ENCODE measurements at regions of chr1 and their contacts with region 1.

Region 1: GRCh38 chr1:19596714-19597495 is 47.2 kb upstream of the NBL1 start:
- DNase-seq: peak; percentile 99
- H3K4me3 Mint-ChIP-seq: peak overlapping the region; percentile 92
- H3K27ac Mint-ChIP-seq: peak overlapping the region; percentile 100
- H3K4me1 Mint-ChIP-seq: peaks cover 45% of the 10 kb centered on the region
- H3K27me3 Mint-ChIP-seq: no peaks in the 10 kb centered on the region

Region 2: GRCh38 chr1:18926315-18927081 is 670.4 kb before region 1 on chr1:
- CTCF ChIA-PET with region 1: no interaction called
- POLR2A ChIA-PET with region 1: no interaction called
- intact Hi-C with region 1: loop called (anchors 10 kb)
- DNase-seq: peak; percentile 94
- H3K4me3 Mint-ChIP-seq: peak overlapping the region; percentile 79
- H3K27ac Mint-ChIP-seq: peak overlapping the region; percentile 100
- H3K4me1 Mint-ChIP-seq: peaks cover 79% of the 10 kb centered on the region
- H3K27me3 Mint-ChIP-seq: no peaks in the 10 kb centered on the region

Region 3: GRCh38 chr1:19257178-19257914 is 339.6 kb before region 1 on chr1:
- CTCF ChIA-PET with region 1: no interaction called
- POLR2A ChIA-PET with region 1: interaction called, 3 read pairs
- intact Hi-C with region 1: loop called (anchors 5 kb)
- DNase-seq: peak; percentile 80
- H3K4me3 Mint-ChIP-seq: peak overlapping the region; percentile 40
- H3K27ac Mint-ChIP-seq: peak overlapping the region; percentile 96
- H3K4me1 Mint-ChIP-seq: peaks cover 51% of the 10 kb centered on the region
- H3K27me3 Mint-ChIP-seq: no peaks in the 10 kb centered on the region

Region 4: GRCh38 chr1:19390901-19391595 is 205.9 kb before region 1 on chr1:
- CTCF ChIA-PET with region 1: interaction called, 9 read pairs
- POLR2A ChIA-PET with region 1: interaction called, 3 read pairs
- intact Hi-C with region 1: loop called (anchors 1 kb)
- DNase-seq: peak; percentile 69
- H3K4me3 Mint-ChIP-seq: peak overlapping the region; percentile 76
- H3K27ac Mint-ChIP-seq: peak overlapping the region; percentile 94
- H3K4me1 Mint-ChIP-seq: peaks cover 76% of the 10 kb centered on the region
- H3K27me3 Mint-ChIP-seq: no peaks in the 10 kb centered on the region

Region 5: DNA sequence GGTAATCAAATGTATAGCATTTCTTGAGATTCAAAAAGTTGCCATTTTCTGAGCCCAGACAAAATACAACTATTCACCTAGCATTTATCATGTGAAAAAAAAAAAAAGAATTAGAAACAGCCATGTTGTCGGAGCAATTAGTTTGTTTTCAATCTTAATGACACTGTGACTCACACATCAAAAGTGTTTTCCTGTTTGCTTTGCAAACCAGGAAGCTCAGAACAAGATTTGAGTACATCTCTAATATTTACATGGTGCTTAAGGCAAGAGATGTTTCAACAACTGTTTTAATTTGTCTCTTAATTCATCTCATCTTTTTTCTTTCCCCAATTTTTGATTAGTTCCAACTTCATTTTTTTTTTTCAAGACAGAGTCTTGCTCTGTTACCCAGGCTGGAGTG is 49.1 kb before region 1 on chr1:
- CTCF ChIA-PET with region 1: no interaction called
- POLR2A ChIA-PET with region 1: no interaction called
- intact Hi-C with region 1: no loop called
- DNase-seq: no peak
- H3K4me3 Mint-ChIP-seq: no peak overlapping the region
- H3K27ac Mint-ChIP-seq: no peak overlapping the region
- H3K4me1 Mint-ChIP-seq: peaks cover 8% of the 10 kb centered on the region
- H3K27me3 Mint-ChIP-seq: peaks cover 3% of the 10 kb centered on the region

Region 6: GRCh38 chr1:19606817-19607642 is 10.1 kb after region 1 on chr1:
- CTCF ChIA-PET with region 1: no interaction called
- POLR2A ChIA-PET with region 1: interaction called, 6 read pairs
- intact Hi-C with region 1: loop called (anchors 1 kb)
- DNase-seq: peak; percentile 69
- H3K4me3 Mint-ChIP-seq: no peak overlapping the region
- H3K27ac Mint-ChIP-seq: peak overlapping the region; percentile 75
- H3K4me1 Mint-ChIP-seq: peaks cover 57% of the 10 kb centered on the region
- H3K27me3 Mint-ChIP-seq: no peaks in the 10 kb centered on the region

Region 7: GRCh38 chr1:19619697-19620384 is 22.9 kb after region 1 on chr1:
- CTCF ChIA-PET with region 1: no interaction called
- POLR2A ChIA-PET with region 1: no interaction called
- intact Hi-C with region 1: no loop called
- DNase-seq: no peak
- H3K4me3 Mint-ChIP-seq: no peak overlapping the region
- H3K27ac Mint-ChIP-seq: no peak overlapping the region
- H3K4me1 Mint-ChIP-seq: peaks cover 20% of the 10 kb centered on the region
- H3K27me3 Mint-ChIP-seq: no peaks in the 10 kb centered on the region

Region 8: DNA sequence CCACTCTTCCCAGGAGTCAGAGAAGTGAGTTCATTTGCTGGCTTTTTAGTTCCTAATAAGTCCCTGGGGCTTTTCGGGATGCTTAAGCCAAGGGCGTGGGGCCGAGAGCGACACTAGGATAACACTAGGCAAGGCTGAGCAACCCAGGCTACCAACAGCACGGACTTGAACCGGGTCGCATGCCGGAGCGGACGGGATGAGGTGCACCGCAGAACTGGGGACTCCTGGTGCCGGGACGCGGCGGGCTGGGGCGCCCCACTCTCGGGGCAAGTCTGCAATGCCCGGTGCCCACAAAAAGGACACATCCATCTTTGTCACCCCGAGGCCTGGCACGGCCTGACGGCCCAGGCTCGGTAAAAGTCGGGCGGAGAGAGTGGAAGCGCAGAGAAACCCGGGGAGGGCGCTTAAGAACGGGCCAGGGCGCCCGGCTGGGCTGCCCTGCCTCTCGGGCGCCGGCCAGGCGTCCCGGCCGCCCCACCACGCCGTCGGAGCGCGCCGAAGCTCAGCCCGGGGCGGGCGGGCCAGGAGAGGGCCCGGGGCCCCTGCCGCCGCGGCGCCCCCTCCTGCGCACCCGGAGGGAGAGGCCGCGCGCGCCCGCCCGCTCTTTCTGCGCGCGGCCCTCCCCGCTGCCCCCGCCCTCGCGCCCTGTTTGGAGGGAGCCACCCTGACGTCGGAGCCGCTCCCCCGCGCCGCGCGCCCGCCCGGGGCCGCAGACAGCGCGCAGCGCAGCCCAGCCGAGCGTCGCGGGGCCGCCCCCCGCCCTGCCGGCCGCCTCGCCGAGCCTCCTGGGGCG is 46.9 kb after region 1 on chr1 and contains the start of gene NBL1:
- CTCF ChIA-PET with region 1: interaction called, 4 read pairs
- POLR2A ChIA-PET with region 1: interaction called, 6 read pairs
- intact Hi-C with region 1: loop called (anchors 1 kb)
- DNase-seq: peak; percentile 78
- H3K4me3 Mint-ChIP-seq: peak within 1 kb of the TSS; percentile 87
- H3K27ac Mint-ChIP-seq: peak within 1 kb of the TSS; percentile 77
- H3K4me1 Mint-ChIP-seq: peaks cover 32% of the 10 kb centered on the region
- H3K27me3 Mint-ChIP-seq: peaks cover 9% of the 10 kb centered on the region
- total RNA-seq, gene NBL1: 25.0 to 31.3 TPM

Region 9: DNA sequence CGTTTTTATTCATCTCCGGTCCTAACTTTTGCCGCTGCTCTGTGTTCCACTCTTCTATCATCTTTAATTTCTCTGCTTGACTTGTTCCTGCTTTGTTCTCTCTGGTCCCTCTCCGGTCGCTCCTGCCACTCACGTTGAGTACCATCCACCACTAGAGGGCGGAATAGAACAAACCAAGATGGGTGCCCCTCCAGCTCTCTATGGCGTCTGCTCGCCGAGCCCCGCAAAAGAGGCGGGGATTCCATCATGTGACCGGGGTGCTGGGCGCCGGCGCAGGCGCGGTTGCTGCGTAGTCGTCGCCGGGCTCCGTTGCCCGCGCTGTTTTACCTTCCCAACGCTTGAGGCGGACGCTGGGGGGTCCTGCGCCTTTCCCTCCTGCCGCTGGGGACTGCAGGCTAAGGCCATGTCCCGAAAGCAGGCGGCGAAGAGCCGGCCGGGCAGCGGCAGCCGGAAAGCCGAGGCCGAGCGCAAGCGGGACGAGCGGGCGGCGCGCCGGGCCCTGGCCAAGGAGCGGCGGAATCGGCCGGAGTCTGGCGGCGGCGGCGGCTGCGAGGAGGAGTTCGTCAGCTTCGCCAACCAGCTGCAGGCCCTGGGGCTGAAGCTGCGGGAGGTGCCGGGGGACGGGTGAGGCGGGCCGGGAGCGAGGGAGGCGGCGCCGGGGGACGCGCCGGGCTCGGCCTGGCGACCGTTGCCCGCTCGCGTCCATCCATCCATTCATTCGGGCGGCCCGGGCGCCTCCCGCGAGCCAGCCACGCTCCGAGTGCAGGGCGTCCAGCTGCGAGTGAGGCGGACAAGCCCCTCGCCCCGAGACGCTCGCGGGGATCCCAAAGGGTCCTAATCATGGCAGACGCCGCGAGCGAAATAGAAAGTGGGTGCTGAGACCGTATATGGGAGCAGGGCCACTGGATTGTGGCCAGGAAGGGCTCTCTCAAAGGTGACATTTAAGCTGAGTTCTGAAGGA is 285.5 kb after region 1 on chr1 and contains the start of gene OTUD3:
- CTCF ChIA-PET with region 1: no interaction called
- POLR2A ChIA-PET with region 1: no interaction called
- intact Hi-C with region 1: loop called (anchors 10 kb)
- DNase-seq: peak; percentile 97
- H3K4me3 Mint-ChIP-seq: peak within 1 kb of the TSS; percentile 84
- H3K27ac Mint-ChIP-seq: peak within 1 kb of the TSS; percentile 14
- H3K4me1 Mint-ChIP-seq: peaks cover 37% of the 10 kb centered on the region
- H3K27me3 Mint-ChIP-seq: peaks cover 7% of the 10 kb centered on the region
- total RNA-seq, gene OTUD3: 6.9 to 8.4 TPM

Measured in activated CD4-positive, alpha-beta memory T cell treated with anti-CD3 and anti-CD28 coated beads for 36 hours (primary cell).